Cardiac septum (tissue), 1 donor: ENCODE measurements at regions of chr9 and their contacts with region 1.

Region 1: DNA sequence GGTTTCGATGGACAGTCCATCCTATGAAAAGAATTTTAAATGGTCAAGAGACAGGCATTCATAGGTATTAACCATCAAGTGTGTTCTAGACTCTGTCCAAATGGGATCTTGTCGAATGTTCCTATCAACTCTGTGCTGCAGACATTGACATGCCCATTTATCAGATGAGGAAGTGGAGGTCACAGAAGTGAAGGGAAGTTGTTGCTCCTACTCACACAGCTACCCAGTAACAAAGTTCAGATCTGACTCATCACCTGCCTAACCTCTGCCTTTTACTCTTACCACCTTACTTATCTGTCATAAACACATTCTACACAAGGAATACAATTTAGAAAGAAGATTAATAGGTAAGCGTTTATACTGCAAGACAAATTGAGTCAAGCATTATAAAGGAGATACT is 426.2 kb upstream of the BRINP1 start:
- DNase-seq: no peak

Region 2: DNA sequence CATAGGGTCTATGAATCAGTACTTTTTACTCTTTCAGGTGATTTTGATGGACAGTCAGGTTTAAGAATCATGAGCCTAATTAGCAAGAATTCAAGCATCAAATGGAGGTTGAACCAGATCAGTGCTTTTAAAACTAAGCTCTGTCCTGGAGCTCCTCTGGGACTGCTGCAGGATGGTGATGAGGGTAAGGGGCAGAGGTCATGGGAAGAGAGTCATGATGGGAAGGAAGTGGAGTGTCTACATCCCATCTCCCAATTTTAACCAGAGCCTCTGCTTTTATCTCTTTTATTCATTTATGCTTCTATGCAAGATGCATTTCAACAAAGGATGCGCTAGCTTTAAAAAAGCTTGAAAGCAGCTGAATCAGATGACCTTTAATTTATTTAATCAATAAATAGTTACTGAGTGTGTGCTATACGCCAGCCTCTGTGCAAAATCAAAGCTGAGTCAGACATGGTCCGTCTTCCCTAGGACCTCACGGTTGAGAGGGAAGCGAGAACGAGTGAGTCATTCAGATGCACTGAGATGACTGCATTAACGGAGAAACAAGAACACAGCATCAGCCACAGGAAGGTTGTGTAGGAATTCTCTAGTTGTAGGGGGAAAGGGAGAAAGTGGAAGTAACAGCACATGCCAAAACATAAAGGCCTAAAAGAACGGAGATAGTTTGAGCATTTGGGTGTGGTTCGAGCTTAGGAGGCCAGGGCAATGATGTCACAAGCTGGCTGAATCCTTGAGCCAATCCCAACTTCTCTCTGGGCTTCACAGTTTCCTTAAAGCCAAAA is 15.4 kb after region 1 on chr9:
- intact Hi-C with region 1: loop called (anchors 2 kb)
- DNase-seq: no peak

Region 3: DNA sequence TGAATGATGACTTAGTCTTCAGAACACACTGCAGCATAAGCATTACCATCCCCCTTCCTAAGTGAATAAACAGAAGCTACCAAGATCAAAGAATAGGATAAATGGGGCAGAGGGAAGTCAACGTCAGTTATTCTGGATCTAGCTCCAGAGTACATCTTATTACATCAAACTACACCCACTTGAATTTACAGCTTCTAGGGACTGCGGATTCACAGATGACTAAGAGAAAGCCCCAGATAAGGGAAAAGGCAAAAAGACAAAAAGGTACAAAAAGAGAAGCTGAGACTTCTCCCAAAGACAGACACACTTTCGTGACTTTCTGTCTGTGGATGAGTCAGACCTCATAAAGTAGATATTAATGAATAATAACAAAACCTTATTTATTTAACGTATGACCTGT is 31.7 kb after region 1 on chr9:
- intact Hi-C with region 1: no loop called
- DNase-seq: no peak